WTC11 (cell line): ENCODE measurements at regions of chr3 and their contacts with region 1.

Region 1: DNA sequence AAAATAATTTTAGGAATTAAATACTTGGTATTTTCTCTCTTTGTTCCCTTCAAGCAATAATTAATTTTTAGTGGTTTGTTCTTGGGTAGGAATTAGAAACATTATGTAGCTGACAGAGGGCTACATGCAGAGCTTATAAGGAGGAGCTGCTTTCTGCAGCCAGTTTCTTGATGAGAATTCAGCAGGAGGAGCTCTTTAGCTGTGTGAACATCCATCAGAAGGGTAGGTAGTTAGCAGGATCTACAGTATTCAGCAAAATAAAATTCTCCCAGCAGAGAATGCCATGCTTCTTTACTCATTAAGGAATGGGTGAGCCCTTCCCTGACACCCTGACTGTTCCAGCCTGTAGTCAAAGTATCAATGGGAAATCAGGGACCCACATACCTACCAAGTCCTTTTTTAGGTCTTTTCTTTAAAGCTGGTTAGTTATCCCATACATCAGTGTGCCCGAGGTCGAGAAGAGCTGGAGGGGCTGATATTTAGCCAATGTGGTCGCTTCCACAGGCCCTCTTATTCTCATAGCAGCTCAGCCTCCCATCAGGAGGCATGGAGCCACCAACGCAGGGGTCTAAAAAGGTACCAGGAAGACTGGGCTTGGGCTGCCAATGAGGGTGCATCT is 54.0 kb downstream of the KCNAB1 start:
- DNase-seq: no peak
- ATAC-seq: peak; percentile 71
- H3K4me3 Mint-ChIP-seq: no peak overlapping the region
- H3K27ac Mint-ChIP-seq: no peak overlapping the region
- H3K4me1 Mint-ChIP-seq: no peaks in the 10 kb centered on the region
- H3K27me3 Mint-ChIP-seq: no peaks in the 10 kb centered on the region
- CTCF ChIP-seq: no peak

Region 2: DNA sequence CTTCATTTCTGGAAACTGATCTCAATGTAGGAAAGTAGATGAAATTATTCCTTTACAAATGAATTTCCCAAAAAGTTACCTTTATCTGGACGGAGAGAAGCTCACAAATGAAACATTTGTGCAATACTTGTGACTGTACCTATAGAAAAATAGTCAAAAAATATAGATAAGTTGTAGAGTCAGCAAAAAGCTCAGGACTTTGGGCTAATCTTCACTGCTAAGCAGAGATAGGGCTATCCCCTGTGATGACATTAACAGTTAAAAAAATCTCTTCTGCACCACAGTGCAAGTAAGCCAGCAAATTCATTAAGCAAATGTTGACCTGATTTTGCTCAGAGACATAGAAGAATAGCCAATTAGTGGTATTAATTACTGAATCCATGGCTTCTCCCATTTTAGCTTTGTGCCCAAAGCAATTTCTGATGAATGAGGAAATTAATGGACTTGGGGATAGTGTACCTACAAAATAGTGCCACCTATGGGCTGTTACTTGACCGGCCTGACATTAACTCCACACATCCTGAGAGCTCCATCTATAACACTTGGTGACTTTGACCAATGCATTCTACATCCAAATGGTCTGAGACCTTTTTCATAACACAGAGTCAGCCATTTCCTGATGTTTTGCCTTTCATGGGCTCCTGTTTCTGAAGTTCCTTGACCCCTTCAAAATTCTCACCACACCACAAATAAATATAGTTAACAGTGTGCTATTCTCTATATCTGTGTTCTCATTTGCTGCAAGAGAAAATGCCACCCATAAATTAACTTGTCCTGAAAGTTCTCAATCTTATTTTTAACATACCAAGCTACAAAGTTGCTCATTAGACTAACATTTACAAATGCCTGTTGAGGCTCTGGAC is 275.6 kb after region 1 on chr3:
- CTCF ChIA-PET with region 1: interaction called, 16 read pairs
- POLR2A ChIA-PET with region 1: no interaction called
- DNase-seq: peak; percentile 18
- ATAC-seq: peak; percentile 79
- H3K4me3 Mint-ChIP-seq: no peak overlapping the region
- H3K27ac Mint-ChIP-seq: no peak overlapping the region
- H3K4me1 Mint-ChIP-seq: peaks cover 2% of the 10 kb centered on the region; the same call in 1 of the 2 replicates
- H3K27me3 Mint-ChIP-seq: no peaks in the 10 kb centered on the region; the same call in 1 of the 2 replicates
- CTCF ChIP-seq: peak; percentile 40